ENCODE measurements at regions of chr16 and their contacts with region 1.

Region 1: GRCh38 chr16:30797670-30798309 is 10.8 kb upstream of the ZNF629 start:
- DNase-seq: no peak
- H3K4me3 ChIP-seq: no peak overlapping the region
- H3K27ac ChIP-seq: no peak overlapping the region
- H3K4me1 ChIP-seq: no peaks in the 10 kb centered on the region
- H3K27me3 ChIP-seq: no peaks in the 10 kb centered on the region
- CTCF ChIP-seq: no peak

Region 2: GRCh38 chr16:30874821-30875717 is 77.3 kb after region 1 on chr16:
- intact Hi-C with region 1: loop called (anchors 10 kb)
- DNase-seq: peak; percentile 85 to 92
- H3K4me3 ChIP-seq: peak overlapping the region; percentile 89 to 98
- H3K27ac ChIP-seq: peak overlapping the region; percentile 78 to 84
- H3K4me1 ChIP-seq: peaks cover 8 to 23% (median 17%) of the 10 kb centered on the region in 4 donors
- H3K27me3 ChIP-seq: no peaks in the 10 kb centered on the region
- CTCF ChIP-seq: no peak

Region 3: GRCh38 chr16:30977502-30977901 is 179.7 kb after region 1 on chr16:
- intact Hi-C with region 1: no loop called
- DNase-seq: no peak
- H3K4me3 ChIP-seq: no peak overlapping the region
- H3K27ac ChIP-seq: no peak overlapping the region
- H3K4me1 ChIP-seq: no peaks in the 10 kb centered on the region
- H3K27me3 ChIP-seq: no peaks in the 10 kb centered on the region
- CTCF ChIP-seq: no peak

Measured in tibial artery (tissue), 4 donors.